Activated CD4-positive, alpha-beta memory T cell treated with anti-CD3 and anti-CD28 coated beads for 36 hours (primary cell): ENCODE measurements at regions of chr1 and their contacts with region 1.

Region 1: DNA sequence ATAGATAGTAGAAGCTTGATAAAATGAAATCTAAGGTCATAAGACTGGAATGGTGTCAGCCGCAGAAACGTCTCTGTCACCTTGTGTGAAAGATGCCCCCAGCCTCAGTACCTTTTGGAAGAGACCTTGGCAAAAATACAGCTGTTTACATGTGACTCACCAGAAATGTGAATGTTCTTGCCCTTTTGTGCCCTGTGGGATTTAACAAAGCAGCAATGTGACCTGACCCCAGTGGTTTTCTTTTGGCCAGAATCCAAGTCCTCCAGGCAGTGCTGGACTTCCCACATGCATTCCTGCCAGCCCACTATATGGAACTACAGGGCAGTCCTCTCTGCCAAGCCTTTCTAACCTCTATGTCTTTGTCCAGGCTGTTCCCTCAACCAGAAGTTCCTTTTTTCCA is 27.2 kb upstream of the LRRC8C start:
- DNase-seq: no peak
- H3K4me3 Mint-ChIP-seq: peak overlapping the region; percentile 43
- H3K27ac Mint-ChIP-seq: peak overlapping the region; percentile 100
- H3K4me1 Mint-ChIP-seq: peaks cover 98% of the 10 kb centered on the region
- H3K27me3 Mint-ChIP-seq: no peaks in the 10 kb centered on the region

Region 2: GRCh38 chr1:89041119-89041641 is 564.5 kb before region 1 on chr1:
- CTCF ChIA-PET with region 1: no interaction called
- POLR2A ChIA-PET with region 1: no interaction called
- intact Hi-C with region 1: loop called (anchors 10 kb)
- DNase-seq: peak; percentile 66
- H3K4me3 Mint-ChIP-seq: no peak overlapping the region
- H3K27ac Mint-ChIP-seq: peak overlapping the region; percentile 70
- H3K4me1 Mint-ChIP-seq: peaks cover 41% of the 10 kb centered on the region
- H3K27me3 Mint-ChIP-seq: peaks cover 13% of the 10 kb centered on the region

Region 3: GRCh38 chr1:89274411-89274857 is 331.3 kb before region 1 on chr1:
- CTCF ChIA-PET with region 1: no interaction called
- POLR2A ChIA-PET with region 1: no interaction called
- intact Hi-C with region 1: loop called (anchors 5 kb)
- DNase-seq: no peak
- H3K4me3 Mint-ChIP-seq: peak overlapping the region; percentile 80
- H3K27ac Mint-ChIP-seq: peak overlapping the region; percentile 99
- H3K4me1 Mint-ChIP-seq: peaks cover 76% of the 10 kb centered on the region
- H3K27me3 Mint-ChIP-seq: no peaks in the 10 kb centered on the region

Region 4: DNA sequence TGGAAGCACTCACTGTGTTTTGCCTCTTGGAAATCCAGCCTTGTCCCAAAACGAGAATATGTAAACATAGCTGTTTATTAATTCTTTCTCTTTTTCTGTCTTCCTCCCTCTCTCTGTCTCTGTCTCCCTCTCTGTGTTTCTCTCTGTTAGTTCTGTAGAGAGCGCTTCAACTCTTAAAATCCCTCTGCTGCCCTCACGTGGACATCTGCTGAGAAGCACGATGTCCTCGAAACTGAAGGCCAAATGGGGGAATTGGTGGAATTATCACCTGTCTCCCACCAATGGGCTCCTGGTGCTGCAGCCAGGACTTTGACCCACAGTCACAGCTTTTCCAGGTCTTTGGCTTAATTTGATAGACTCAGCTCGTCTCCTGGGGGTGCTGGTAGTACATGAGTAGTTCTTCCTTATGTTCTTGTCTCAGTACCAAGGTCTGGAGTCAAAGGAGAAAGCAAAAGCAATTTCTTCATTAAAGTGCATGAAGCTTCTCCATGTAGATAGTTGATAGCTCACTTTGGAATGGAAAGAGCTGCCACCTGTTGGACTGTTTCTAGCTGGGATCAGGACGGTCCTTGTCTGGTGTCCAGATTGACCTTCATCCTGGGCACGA is 247.3 kb before region 1 on chr1:
- CTCF ChIA-PET with region 1: no interaction called
- POLR2A ChIA-PET with region 1: no interaction called
- intact Hi-C with region 1: no loop called
- DNase-seq: peak; percentile 86
- H3K4me3 Mint-ChIP-seq: peak overlapping the region; percentile 68
- H3K27ac Mint-ChIP-seq: peak overlapping the region; percentile 72
- H3K4me1 Mint-ChIP-seq: peaks cover 41% of the 10 kb centered on the region
- H3K27me3 Mint-ChIP-seq: no peaks in the 10 kb centered on the region

Region 5: DNA sequence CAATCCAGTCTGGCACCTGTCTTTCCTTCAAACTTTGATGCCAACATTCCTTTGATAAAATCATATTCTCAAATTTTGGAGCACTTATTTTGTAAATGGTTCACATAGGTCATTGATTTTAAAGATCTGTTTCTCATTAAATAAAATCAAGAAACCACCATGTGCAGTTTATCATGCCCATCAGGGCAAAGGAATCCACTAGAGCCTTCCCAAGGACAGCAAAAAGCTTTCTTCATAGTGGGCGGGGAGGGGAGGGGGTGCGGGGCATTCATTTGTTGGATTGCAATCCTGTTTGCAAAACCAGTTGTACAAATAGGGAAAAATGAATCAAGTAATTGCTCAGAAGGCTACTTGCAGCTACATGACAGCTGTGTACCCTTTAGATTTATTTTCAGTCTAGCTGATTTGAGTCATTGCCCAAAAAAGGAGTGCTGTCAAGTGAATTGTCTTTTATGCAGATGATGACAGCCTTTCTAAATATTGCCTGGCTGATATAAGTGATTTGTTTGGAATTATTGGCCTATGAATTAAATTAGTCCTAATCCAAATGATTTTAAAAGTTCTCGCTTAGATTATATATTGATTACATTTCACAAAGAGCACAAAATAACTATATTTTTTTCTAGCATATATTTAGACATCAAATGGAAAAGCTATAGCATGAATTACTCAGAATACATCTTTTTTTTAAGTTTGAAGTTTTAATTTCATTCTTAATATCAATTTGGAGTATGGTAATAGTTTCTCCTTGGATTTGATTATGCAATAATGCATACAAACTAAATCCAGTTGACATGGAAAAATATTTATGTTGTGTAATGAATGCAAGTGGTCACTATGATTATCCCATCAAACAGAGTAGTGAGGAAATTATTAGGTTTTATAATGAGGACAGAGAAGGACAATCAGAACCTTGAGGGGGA is 57.9 kb before region 1 on chr1:
- CTCF ChIA-PET with region 1: interaction called, 14 read pairs
- POLR2A ChIA-PET with region 1: interaction called, 32 read pairs
- intact Hi-C with region 1: loop called (anchors 1 kb)
- DNase-seq: peak; percentile 71
- H3K4me3 Mint-ChIP-seq: peak overlapping the region; percentile 30
- H3K27ac Mint-ChIP-seq: peak overlapping the region; percentile 85
- H3K4me1 Mint-ChIP-seq: peaks cover 88% of the 10 kb centered on the region
- H3K27me3 Mint-ChIP-seq: no peaks in the 10 kb centered on the region

Region 6: GRCh38 chr1:89632657-89633247 is 27.1 kb after region 1 on chr1 and contains the start of gene LRRC8C:
- CTCF ChIA-PET with region 1: interaction called, 18 read pairs
- POLR2A ChIA-PET with region 1: interaction called, 225 read pairs
- intact Hi-C with region 1: loop called (anchors 1 kb)
- DNase-seq: peak; percentile 90
- H3K4me3 Mint-ChIP-seq: peak within 1 kb of the TSS; percentile 93
- H3K27ac Mint-ChIP-seq: peak within 1 kb of the TSS; percentile 95
- H3K4me1 Mint-ChIP-seq: peaks cover 68% of the 10 kb centered on the region
- H3K27me3 Mint-ChIP-seq: no peaks in the 10 kb centered on the region
- total RNA-seq, gene LRRC8C: 36.4 to 40.4 TPM

Region 7: GRCh38 chr1:89843281-89844121 is 237.8 kb after region 1 on chr1:
- CTCF ChIA-PET with region 1: interaction called, 5 read pairs
- POLR2A ChIA-PET with region 1: interaction called, 5 read pairs
- intact Hi-C with region 1: loop called (anchors 2 kb)
- DNase-seq: peak; percentile 89
- H3K4me3 Mint-ChIP-seq: peak overlapping the region; percentile 93
- H3K27ac Mint-ChIP-seq: peak overlapping the region; percentile 92
- H3K4me1 Mint-ChIP-seq: peaks cover 51% of the 10 kb centered on the region
- H3K27me3 Mint-ChIP-seq: no peaks in the 10 kb centered on the region